Activated naive CD8-positive, alpha-beta T cell treated with anti-CD3 and anti-CD28 coated beads, Interleukin-2, amount 10 ng/mL, durations not matched to agents 7 days and 5 days (primary cell): ENCODE measurements at regions of chr16 and their contacts with region 1.

Region 1: GRCh38 chr16:88662843-88663606 is at the start of gene MVD:
- DNase-seq: peak; percentile 94
- ATAC-seq: peak; percentile 99
- H3K4me3 Mint-ChIP-seq: peak within 1 kb of the TSS; percentile 97
- H3K27ac Mint-ChIP-seq: peak within 1 kb of the TSS; percentile 94
- H3K4me1 Mint-ChIP-seq: peaks cover 16% of the 10 kb centered on the region
- H3K27me3 Mint-ChIP-seq: no peaks in the 10 kb centered on the region
- total RNA-seq, gene MVD: 80.7 to 84.2 TPM

Region 2: GRCh38 chr16:88591577-88592021 is 71.4 kb before region 1 on chr16:
- POLR2A ChIA-PET with region 1: no interaction called
- DNase-seq: no peak
- ATAC-seq: no peak
- H3K4me3 Mint-ChIP-seq: no peak overlapping the region
- H3K27ac Mint-ChIP-seq: no peak overlapping the region
- H3K4me1 Mint-ChIP-seq: peaks cover 12% of the 10 kb centered on the region
- H3K27me3 Mint-ChIP-seq: no peaks in the 10 kb centered on the region

Region 3: GRCh38 chr16:88640498-88641247 is 22.4 kb before region 1 on chr16:
- POLR2A ChIA-PET with region 1: no interaction called
- DNase-seq: no peak
- ATAC-seq: no peak
- H3K4me3 Mint-ChIP-seq: no peak overlapping the region
- H3K27ac Mint-ChIP-seq: no peak overlapping the region
- H3K4me1 Mint-ChIP-seq: peaks cover 21% of the 10 kb centered on the region
- H3K27me3 Mint-ChIP-seq: peaks cover 33% of the 10 kb centered on the region

Region 4: GRCh38 chr16:88650749-88651275 is 12.2 kb before region 1 on chr16 and contains the start of gene CYBA:
- POLR2A ChIA-PET with region 1: interaction called, 15 read pairs
- DNase-seq: peak; percentile 94
- ATAC-seq: peak; percentile 87
- H3K4me3 Mint-ChIP-seq: peak within 1 kb of the TSS; percentile 91
- H3K27ac Mint-ChIP-seq: peak within 1 kb of the TSS; percentile 96
- H3K4me1 Mint-ChIP-seq: peaks cover 9% of the 10 kb centered on the region
- H3K27me3 Mint-ChIP-seq: no peaks in the 10 kb centered on the region
- total RNA-seq, gene CYBA: 505 to 513 TPM

Region 5: DNA sequence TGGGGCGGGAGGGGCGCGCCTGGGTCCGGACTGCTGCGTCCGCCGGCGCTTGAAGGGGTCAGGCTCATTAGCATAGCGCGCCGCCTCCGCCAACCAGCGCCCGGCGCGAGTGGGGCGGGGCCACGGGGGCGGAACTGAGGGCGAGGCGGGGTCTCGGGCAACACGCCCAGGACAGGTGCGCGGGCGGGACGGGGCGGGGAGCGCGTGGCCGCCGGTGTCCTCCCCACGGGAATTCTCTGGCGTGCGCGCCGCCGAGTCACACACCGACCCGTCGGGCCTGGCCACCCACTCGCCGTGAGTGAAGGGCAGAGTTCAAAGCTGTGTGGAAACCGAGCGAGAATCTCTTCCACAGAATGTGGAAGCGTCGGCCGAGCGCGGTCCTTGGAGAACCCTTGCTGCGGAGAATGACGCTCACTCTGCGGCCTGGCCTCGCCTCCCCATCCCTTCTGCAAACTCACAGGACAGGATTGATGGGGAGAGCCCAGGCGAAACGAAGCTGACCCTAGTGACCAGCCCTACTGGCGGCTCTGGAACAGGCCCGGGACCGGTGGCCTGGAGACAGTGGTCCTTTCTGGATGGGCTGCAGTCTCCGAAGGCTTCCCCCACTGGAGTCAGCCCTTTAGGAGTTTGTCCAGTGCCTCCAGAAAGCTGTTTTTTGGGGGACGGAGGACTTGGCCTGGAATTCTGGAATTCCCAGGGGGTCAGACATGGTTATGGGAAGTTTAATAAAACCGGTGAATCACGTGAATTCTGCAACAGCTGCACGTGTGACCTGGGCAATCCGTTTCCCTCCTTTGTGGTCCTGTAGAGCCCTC is 23.6 kb after region 1 on chr16 and contains the start of gene SNAI3:
- POLR2A ChIA-PET with region 1: interaction called, 11 read pairs
- DNase-seq: peak; percentile 95
- ATAC-seq: peak; percentile 79
- H3K4me3 Mint-ChIP-seq: peak within 1 kb of the TSS; percentile 86
- H3K27ac Mint-ChIP-seq: peak within 1 kb of the TSS; percentile 73
- H3K4me1 Mint-ChIP-seq: peaks cover 32% of the 10 kb centered on the region
- H3K27me3 Mint-ChIP-seq: peaks cover 1% of the 10 kb centered on the region
- total RNA-seq, gene SNAI3: 14.4 to 15.0 TPM